Lower leg skin (tissue), 4 donors: ENCODE measurements at regions of chr14 and their contacts with region 1.

Region 1: GRCh38 chr14:100654814-100655740 is 67.9 kb upstream of the BEGAIN start:
- DNase-seq: no peak
- H3K4me3 ChIP-seq: no peak overlapping the region
- CTCF ChIP-seq: no peak
- POLR2A ChIP-seq: no peak

Region 2: DNA sequence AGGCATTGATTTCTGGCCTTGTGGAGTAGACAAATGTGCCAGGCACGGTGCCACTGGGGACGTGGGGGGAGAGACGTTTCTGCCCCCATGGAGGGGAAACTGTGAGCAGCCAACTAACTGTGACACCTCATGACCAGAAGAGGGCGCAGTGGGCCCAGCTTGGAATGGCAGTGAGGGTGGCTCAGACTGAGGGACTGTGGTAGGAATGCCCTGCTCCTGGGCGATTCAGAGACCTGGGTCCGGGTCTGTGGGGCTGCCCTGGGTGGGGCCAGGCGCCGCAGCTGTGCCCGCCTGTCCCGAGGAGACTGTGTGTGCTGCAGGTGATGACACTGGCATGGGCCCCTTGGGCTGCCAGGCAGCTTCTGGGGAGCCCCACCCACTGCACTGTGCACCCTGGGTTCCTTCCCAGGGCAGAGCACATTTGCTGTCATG is 271.3 kb before region 1 on chr14:
- intact Hi-C with region 1: loop called (anchors 10 kb)
- DNase-seq: peak; percentile 43 to 90
- H3K4me3 ChIP-seq: no peak overlapping the region
- CTCF ChIP-seq: peak in 1 of 3 donors; percentile 47
- POLR2A ChIP-seq: no peak